Activated CD4-positive, alpha-beta memory T cell treated with anti-CD3 and anti-CD28 coated beads for 36 hours (primary cell): ENCODE measurements at regions of chr16 and their contacts with region 1.

Region 1: DNA sequence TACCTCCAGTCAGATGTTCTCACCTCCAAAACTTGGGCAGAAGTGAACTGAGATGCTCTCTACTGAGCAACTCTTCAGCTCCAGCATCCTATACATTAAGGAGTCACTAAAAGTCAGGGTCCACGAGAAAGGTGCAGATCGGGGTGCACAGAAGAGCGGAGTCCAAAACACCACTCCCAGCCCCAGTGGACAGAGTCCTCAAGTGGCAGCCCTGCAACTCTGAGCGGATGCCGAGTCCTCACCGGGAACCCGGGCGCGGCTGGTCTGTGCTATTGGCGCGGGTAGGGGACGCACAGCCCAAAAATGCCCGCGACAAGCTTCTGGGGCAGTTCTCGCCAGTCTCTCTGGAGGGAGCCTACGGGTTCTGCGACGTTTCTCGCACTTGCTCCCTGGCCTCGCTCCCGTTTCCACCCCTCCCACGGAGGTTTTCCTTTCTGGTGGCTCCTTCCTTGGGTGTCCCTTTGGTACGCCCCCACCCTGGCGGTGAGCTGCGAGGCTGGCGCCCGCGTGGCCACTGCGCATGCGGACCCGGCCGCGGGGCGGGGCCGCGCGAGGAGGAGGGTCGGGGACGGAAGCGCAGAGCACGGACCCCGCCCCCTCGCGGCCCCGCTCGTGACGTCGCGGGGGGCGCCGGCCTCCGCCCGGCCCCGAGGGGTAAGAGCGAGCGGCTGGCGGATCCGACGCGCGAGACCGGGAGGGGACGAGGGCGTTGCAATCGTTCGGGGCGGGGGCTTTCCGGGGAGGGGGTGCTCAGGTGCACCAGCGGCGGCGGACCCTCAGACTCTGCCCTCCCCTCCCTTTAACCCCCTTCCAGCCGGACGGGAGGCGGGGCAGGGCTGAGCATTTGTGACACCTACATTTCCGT is at the start of gene TMEM219:
- DNase-seq: peak; percentile 94
- H3K4me3 Mint-ChIP-seq: peak within 1 kb of the TSS; percentile 85
- H3K27ac Mint-ChIP-seq: peak within 1 kb of the TSS; percentile 83
- H3K4me1 Mint-ChIP-seq: peaks cover 16% of the 10 kb centered on the region
- H3K27me3 Mint-ChIP-seq: no peaks in the 10 kb centered on the region
- total RNA-seq, gene TMEM219: 57.1 to 64.8 TPM

Region 2: DNA sequence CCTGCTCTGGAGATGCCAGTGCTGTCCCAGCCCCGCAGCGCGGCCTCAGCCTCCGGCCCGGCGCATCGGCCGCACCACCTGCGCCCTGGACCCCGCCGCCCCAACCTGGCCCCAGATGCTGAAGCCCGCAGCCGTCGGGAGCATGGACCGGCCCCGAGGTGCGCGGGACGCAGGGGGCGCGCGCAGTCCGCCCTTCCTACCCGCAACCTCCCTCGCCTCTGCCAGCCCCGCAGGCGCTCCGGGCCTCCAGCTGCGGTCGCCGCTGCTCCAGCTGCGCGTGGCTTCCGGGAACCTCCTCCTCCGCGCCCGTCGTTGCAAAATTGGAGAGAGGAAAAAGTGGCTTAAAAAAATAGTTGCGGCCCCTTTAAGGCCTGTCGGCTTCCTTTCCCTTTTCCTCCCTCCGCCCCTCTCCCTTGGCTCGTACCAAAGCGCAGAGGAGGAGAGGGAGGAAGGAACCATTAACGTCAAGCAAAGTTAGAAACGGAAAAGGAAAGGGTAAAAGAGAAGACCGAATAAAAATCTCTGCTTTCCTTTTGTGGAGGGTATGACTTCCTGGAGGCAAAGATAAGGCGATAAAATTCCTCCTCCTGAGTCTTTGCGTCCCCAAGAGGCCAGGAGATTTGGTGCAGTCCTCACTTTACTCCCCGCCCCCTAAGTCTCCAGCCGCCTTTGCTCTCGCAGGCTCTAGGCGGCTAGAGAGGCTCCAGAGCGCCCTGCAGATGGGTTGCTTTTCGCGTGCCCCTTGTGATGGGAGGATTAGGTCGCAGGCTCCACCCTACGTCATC is 98.6 kb before region 1 on chr16 and contains the start of gene CDIPT:
- CTCF ChIA-PET with region 1: interaction called, 4 read pairs
- POLR2A ChIA-PET with region 1: no interaction called
- intact Hi-C with region 1: loop called (anchors 1 kb)
- DNase-seq: peak; percentile 95
- H3K4me3 Mint-ChIP-seq: peak within 1 kb of the TSS; percentile 94
- H3K27ac Mint-ChIP-seq: peak within 1 kb of the TSS; percentile 92
- H3K4me1 Mint-ChIP-seq: peaks cover 18% of the 10 kb centered on the region
- H3K27me3 Mint-ChIP-seq: no peaks in the 10 kb centered on the region
- total RNA-seq, gene CDIPT: 39.5 to 43.9 TPM

Region 3: DNA sequence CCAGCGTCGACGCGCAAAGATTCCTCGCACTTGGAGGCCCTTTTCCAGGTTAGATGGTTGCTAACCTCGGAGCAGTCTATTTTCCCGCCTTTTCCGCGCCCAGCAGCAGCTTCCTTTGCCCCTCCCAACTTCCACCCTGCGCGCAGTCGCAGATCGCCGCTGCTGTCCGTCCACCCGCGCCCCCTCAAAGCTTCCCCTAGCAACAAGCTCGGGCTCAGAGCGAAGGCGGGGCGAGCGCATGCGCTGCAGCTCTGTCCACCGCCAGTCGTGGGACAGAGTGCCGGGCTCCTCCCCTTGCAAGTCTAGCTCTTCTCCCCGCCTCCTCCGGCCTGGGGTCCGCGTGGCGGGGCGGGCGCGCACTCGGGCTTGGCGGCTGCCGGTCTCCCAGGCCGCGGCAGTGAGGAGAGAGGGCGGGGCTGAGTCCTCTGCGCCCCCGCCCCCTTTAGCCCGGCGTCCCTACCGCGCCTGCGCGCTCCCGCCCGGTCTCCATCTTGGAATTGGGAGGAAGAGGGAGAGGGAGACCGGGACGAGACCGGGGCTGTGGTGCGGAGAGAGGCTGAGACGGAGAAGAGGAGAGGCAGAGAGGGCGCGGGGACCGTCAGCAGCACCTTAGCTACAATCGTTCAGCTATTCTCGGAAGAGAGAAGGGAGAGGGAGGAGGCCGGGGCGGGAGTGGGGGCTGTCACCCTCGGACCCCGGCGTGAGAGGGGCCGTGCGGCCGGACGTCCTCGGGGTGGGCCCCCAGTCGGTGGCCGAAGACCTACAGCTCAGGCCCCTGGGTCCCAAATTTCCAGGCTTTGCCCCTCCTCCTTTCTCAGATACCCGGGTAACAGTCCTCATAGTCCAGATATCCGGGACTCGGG is 11.9 kb after region 1 on chr16 and contains the start of gene TAOK2:
- CTCF ChIA-PET with region 1: interaction called, 13 read pairs
- POLR2A ChIA-PET with region 1: interaction called, 25 read pairs
- intact Hi-C with region 1: loop called (anchors 1 kb)
- DNase-seq: peak; percentile 98
- H3K4me3 Mint-ChIP-seq: peak within 1 kb of the TSS; percentile 89
- H3K27ac Mint-ChIP-seq: peak within 1 kb of the TSS; percentile 86
- H3K4me1 Mint-ChIP-seq: peaks cover 34% of the 10 kb centered on the region
- H3K27me3 Mint-ChIP-seq: no peaks in the 10 kb centered on the region
- total RNA-seq, gene TAOK2: 27.2 to 28.2 TPM

Region 4: GRCh38 chr16:29985271-29985811 is 23.6 kb after region 1 on chr16:
- CTCF ChIA-PET with region 1: no interaction called
- POLR2A ChIA-PET with region 1: no interaction called
- intact Hi-C with region 1: no loop called
- DNase-seq: no peak
- H3K4me3 Mint-ChIP-seq: no peak overlapping the region
- H3K27ac Mint-ChIP-seq: peak overlapping the region; percentile 33
- H3K4me1 Mint-ChIP-seq: no peaks in the 10 kb centered on the region
- H3K27me3 Mint-ChIP-seq: no peaks in the 10 kb centered on the region

Region 5: GRCh38 chr16:29995911-29996772 is 34.4 kb after region 1 on chr16 and contains the start of gene INO80E:
- CTCF ChIA-PET with region 1: no interaction called
- POLR2A ChIA-PET with region 1: interaction called, 6 read pairs
- intact Hi-C with region 1: loop called (anchors 5 kb)
- DNase-seq: peak; percentile 100
- H3K4me3 Mint-ChIP-seq: peak within 1 kb of the TSS; percentile 99
- H3K27ac Mint-ChIP-seq: peak within 1 kb of the TSS; percentile 99
- H3K4me1 Mint-ChIP-seq: peaks cover 33% of the 10 kb centered on the region
- H3K27me3 Mint-ChIP-seq: no peaks in the 10 kb centered on the region
- total RNA-seq, gene INO80E: 84.1 to 94.0 TPM